ENCODE measurements at regions of chr4 and their contacts with region 1.

Region 1: DNA sequence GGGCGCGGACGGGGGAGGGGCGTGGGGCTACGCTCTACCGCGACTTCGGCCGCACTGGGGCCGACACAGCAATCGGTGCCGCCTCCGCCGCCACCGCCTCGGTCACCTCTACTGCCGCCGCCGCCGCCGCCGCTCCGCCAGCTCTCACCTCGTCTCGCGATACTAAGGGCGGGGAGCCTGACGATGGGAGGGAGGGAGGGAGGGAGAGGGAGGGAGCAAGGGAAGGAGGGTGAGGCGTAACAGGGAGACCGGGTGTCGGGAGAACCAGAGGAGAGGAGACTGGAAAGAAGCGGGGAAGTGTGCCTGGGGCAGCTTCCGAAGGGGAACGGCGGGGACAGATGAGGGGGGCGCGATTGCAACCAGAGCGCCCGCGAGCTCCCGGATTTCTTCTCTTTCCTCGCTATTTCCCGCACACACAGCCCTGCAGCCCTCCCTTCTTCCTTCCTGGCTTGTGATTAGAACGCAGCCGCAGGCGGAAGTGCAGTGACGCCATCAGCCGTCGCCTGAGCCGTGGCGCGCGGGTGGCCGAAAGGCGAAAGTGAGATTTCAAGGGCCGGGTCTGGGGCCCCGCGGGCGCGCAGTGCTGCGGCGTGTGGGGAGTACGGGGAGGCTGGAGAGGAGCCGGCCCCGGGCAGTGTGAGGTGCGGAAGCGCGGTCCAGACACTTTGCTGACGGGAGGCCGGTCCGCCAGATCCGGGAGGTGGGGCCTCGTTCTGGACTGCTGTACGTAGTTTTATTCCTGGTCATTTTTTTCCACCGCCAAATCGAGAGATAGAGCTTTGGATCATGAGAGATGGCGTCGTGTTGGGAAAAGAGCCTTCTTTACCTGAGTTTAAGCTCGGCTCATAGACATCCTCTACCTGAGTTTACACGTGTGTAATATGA is at the start of gene ANKRD17:
- DNase-seq: peak; percentile 95
- ATAC-seq: peak; percentile 93
- total RNA-seq, gene ANKRD17: 46.0 to 56.4 TPM

Region 2: DNA sequence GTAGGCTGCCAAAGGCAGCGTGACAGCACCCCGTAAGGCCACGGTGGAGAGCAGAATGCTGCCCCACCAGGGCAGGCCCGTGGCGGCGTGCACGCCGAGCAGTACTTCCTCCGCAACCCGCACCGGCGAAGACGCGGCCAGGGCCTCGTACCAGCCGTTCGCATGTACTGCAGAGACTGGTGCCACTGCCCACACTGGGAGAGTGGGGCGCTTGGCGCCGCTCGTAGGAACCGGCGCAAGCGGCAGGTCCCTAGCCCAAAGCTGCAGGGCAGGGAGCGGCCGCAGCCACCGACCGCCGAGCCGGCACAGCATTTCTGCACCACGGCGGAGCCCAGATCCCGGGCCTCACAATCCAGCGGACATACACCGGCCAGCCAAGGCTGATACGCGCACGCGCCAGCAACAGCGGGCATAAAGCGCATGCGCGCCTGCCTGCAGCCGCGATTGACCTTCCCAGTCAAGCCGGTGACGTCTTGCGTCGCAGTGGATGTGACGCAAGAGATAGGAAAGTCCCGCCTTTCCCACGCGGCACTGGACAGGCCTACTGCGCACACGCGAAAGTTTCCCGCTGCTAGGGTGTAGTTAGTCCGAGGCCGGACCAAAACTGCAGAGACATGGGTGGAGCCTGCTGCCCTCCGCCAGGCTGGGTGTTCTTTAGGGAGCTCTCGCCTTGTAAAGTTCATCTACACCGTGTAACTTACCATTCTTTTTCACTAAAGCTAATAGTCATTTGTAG is 189.4 kb before region 1 on chr4 and contains the start of gene COX18:
- intact Hi-C with region 1: loop called in 1 of 2 experiments (anchors 2 kb)
- DNase-seq: peak; percentile 99
- ATAC-seq: peak; percentile 97
- total RNA-seq, gene COX18: 13.8 to 15.5 TPM

Region 3: GRCh38 chr4:73103799-73104503 is 155.0 kb before region 1 on chr4:
- intact Hi-C with region 1: no loop called
- DNase-seq: no peak
- ATAC-seq: no peak

Region 4: GRCh38 chr4:73127839-73128453 is 131.0 kb before region 1 on chr4:
- intact Hi-C with region 1: loop called (anchors 10 kb)
- DNase-seq: no peak
- ATAC-seq: peak; percentile 44 to 57

Region 5: DNA sequence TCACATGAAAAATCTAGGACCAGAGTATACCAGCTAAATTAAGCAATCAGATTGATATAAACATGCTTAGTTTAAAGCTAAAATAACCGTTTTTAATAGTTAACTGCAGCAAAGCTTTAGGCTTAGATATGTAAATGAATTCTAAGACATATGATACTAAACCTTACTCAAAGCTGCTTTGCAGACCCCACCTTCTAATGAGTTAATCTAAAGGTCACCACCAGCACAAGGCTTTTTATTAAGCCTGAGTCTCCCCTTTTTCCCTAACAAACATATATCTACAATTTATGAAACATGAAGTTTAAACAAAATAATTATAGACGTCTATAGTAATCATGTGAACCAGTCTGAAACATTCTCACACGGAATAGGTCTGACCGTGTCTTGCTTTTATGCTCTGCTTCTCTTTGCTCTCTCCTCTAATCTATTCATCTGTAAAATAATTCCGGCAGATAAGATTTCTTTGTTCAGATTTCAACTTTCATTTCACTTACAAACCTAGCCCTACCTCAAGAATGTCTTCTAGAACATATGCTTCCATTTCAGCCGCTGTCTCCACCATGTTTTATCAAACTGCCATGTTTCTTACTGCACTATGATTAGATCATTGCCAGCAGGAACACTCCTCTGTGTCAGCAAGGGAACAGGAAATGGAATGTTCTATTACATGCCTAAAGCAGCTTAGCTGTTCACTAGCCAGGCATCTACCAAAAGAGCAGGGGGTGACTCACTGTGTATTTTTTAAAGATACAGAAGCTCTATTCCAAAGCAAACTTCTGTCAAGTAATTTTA is 36.3 kb before region 1 on chr4:
- intact Hi-C with region 1: loop called in 1 of 2 experiments (anchors 5 kb)
- DNase-seq: peak; percentile 41
- ATAC-seq: peak; percentile 100

Measured in left cardiac atrium (tissue), 4 donors.